Body of pancreas (tissue), 4 donors: ENCODE measurements at regions of chr2 and their contacts with region 1.

Region 1: DNA sequence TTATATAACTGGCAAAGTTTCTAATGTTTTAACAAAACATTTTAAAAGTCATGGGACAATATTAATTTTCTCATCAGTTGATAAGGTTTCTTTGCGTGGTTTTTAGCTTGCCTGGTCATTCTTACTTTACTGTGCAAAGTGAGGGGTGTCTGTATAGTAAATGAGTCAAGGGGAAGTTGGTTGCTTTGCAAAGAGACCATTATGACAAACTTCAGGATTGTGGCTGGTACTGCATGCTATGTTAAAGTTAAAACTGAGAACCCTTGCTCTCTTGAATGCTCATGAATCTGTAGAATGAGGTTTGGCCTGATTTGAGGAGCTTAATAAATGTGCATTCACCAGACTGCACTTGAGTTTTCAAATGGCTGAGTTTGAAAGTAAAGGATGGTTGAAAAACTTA is 47.0 kb downstream of the COL4A4 start:
- DNase-seq: no peak
- ATAC-seq: no peak
- H3K4me3 ChIP-seq: no peak overlapping the region
- H3K27ac ChIP-seq: no peak overlapping the region
- H3K4me1 ChIP-seq: no peaks in the 10 kb centered on the region
- H3K27me3 ChIP-seq: no peaks in the 10 kb centered on the region
- CTCF ChIP-seq: no peak
- POLR2A ChIP-seq: no peak

Region 2: GRCh38 chr2:227033471-227034148 is 83.4 kb before region 1 on chr2:
- intact Hi-C with region 1: loop called (anchors 10 kb)
- DNase-seq: peak; percentile 71 to 78 (median 74)
- ATAC-seq: peak; percentile 86
- H3K4me3 ChIP-seq: no peak overlapping the region
- H3K27ac ChIP-seq: peak overlapping the region in 1 of 4 donors; percentile 11
- H3K4me1 ChIP-seq: peaks cover 17% of the 10 kb centered on the region
- H3K27me3 ChIP-seq: no peaks in the 10 kb centered on the region
- CTCF ChIP-seq: peak; percentile 50 to 74 (median 66)
- POLR2A ChIP-seq: no peak

Region 3: DNA sequence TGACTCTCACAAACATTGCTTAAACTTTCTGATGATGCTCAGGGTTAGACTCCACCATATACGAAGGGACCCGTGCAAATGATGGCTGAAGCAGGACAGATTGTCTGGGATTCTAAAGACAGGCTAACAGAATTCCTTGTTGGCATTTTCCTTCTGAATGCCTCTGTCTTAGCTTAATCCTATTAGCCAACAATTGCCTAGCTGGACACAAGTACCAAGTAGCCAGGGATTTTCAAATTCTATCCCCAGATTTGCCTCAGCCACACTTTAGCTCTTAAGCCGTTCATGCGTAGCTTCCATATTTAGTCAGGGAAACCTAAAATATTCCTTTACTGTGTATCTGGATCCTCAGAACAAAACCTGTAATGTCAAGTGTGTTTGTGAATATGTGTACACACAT is 87.4 kb after region 1 on chr2:
- intact Hi-C with region 1: no loop called
- DNase-seq: no peak
- ATAC-seq: no peak
- H3K4me3 ChIP-seq: no peak overlapping the region
- H3K27ac ChIP-seq: no peak overlapping the region
- H3K4me1 ChIP-seq: no peaks in the 10 kb centered on the region
- H3K27me3 ChIP-seq: no peaks in the 10 kb centered on the region
- CTCF ChIP-seq: no peak
- POLR2A ChIP-seq: no peak

Region 4: DNA sequence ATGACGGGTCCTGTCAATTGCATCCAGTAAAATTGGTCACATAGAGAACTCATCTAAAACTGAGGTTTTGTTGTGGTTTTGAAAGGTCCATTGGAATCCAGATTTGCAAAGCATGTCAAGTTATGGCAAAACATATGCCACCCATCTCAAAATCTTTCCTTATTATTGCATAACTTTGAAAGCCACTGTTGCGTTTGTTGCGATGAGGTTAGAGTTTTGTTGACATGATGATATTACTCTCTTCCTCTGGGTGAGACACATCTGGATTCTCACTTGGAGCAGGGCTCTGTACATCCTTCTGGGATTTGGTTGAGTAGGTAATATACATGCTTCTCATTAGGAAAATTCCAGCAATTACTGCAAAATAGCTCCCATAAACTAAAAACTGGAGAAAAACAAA is 570.2 kb after region 1 on chr2:
- intact Hi-C with region 1: no loop called
- DNase-seq: no peak
- ATAC-seq: no peak
- H3K4me3 ChIP-seq: no peak overlapping the region
- H3K27ac ChIP-seq: no peak overlapping the region
- H3K4me1 ChIP-seq: no peaks in the 10 kb centered on the region
- H3K27me3 ChIP-seq: no peaks in the 10 kb centered on the region
- CTCF ChIP-seq: no peak
- POLR2A ChIP-seq: no peak